PC-9 (cell line): ENCODE measurements at regions of chr7 and their contacts with region 1.

Region 1: DNA sequence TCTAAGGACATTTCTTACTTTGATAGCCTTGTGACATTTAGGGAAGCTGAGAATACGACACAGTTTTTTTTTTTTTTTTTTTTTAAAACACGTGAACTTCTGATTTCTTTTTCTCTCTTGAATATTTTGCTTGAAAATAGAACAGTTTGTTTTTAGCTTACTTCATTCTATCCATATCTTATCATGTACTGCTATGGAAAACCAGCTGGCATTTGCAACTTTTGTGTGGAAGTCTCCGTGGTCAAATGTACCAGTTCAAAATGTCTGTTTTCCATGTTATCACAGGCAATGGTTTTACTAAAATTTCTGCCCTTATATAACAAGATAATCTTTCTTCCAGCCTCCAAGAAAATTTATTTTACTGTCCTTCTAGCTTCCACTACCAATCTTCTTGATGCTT is 821.6 kb downstream of the DNAJB9 start:
- DNase-seq: no peak
- H3K4me3 ChIP-seq: no peak overlapping the region
- H3K27ac ChIP-seq: no peak overlapping the region
- H3K4me1 ChIP-seq: no peaks in the 10 kb centered on the region
- H3K27me3 ChIP-seq: no peaks in the 10 kb centered on the region
- CTCF ChIP-seq: no peak

Region 2: DNA sequence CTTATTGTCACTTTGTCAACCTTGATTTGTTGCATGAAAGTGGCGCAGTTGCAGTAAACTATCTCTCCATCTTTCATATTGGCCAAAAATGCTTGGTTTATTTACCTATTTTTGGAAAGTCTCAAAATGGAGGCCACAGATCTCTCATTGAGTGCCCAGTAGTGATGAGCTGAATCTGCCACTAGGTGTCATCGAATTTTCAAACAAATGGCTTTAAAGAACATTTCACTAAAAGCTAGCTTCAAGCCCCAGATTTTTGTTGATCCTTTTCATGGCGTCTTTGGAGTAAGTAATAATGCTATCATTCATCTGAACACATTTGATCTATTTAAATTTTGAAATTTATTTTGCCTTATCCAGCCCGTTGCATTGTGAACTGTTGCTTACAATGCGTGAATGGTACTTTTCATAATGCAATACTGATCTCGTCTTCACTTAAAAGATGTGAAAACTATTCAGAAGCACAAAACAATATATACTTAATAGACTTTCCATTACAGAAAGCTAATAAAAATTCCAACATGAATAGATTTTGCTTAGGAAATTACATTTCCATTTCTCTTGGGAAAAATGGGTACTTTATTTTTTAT is 585.3 kb before region 1 on chr7:
- CTCF ChIA-PET with region 1: no interaction called
- POLR2A ChIA-PET with region 1: no interaction called
- intact Hi-C with region 1: loop called (anchors 10 kb)
- DNase-seq: no peak
- H3K4me3 ChIP-seq: no peak overlapping the region
- H3K27ac ChIP-seq: no peak overlapping the region
- H3K4me1 ChIP-seq: no peaks in the 10 kb centered on the region
- H3K27me3 ChIP-seq: no peaks in the 10 kb centered on the region; the same call in 1 of the 2 replicates
- CTCF ChIP-seq: peak; percentile 61

Region 3: DNA sequence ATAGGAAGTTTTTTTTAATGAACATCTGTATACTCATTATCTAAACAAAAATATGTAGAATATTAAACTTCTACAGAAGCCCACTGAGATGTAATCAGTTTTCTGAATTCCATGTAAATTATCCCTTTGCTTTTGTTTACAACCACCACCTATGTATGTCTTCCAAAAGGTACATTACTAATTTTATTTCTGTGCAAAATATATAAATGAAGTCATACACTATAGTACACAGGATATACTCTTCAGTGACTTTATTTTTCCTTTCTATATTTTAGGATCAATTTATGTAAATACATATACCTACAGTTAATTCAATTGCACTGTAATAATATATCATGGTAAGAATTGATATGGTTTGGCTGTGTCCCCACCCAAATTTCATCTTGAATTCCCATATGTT is 415.3 kb after region 1 on chr7:
- CTCF ChIA-PET with region 1: no interaction called
- POLR2A ChIA-PET with region 1: no interaction called
- intact Hi-C with region 1: no loop called
- DNase-seq: no peak
- H3K4me3 ChIP-seq: no peak overlapping the region
- H3K27ac ChIP-seq: no peak overlapping the region
- H3K4me1 ChIP-seq: no peaks in the 10 kb centered on the region
- H3K27me3 ChIP-seq: no peaks in the 10 kb centered on the region; the same call in 1 of the 2 replicates
- CTCF ChIP-seq: no peak